Mammary epithelial cell (primary cell): ENCODE measurements at regions of chr11 and their contacts with region 1.

Region 1: DNA sequence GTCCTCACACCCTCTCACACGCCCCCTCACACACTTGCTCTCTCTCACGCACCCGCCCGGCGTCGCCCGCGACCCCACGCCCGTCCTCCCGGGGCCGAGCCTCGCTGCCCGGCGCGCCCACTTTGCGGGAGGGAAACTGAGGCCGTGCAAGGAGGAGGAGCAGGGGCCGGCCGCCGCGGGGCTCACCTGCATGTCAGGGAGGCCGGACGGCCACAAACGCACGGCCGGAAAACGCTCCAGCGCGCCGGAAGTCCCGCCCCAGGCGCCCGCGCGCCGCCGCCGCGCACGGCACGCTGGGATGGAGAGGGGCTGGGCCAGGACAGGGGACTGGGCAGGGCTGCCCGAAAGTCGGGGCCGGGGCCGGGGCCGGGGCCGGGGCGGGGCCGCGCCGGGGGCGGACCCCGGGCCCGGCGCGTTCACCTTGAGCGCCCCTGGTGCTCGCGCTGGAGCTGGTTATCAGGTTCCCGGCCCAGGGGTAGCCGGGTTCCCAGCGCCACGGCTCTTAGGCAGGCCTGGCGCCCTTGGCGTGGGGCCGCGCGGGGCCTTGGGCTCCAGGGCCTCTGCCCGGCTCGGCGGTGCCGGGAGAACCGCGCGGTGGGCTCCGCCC is at the start of gene CHID1:
- DNase-seq: peak; percentile 86
- H3K4me3 ChIP-seq: peak within 1 kb of the TSS; percentile 88 to 91 (median 89)
- H3K27ac ChIP-seq: peak within 1 kb of the TSS; percentile 24
- H3K4me1 ChIP-seq: peaks cover 11% of the 10 kb centered on the region
- H3K27me3 ChIP-seq: no peaks in the 10 kb centered on the region
- CTCF ChIP-seq: peak in 1 of 2 donors; percentile 12
- total RNA-seq, gene CHID1: 61.7 to 110 TPM

Region 2: GRCh38 chr11:925496-926321 is 15.0 kb after region 1 on chr11 and contains the start of gene AP2A2:
- CTCF ChIA-PET with region 1: no interaction called
- dilution Hi-C with region 1: no loop called
- in situ Hi-C with region 1: no loop called
- intact Hi-C with region 1: loop called (anchors 2 kb)
- DNase-seq: peak; percentile 81
- H3K4me3 ChIP-seq: peak within 1 kb of the TSS; percentile 72 to 82 (median 78)
- H3K27ac ChIP-seq: peak within 1 kb of the TSS; percentile 29
- H3K4me1 ChIP-seq: peaks cover 6% of the 10 kb centered on the region
- H3K27me3 ChIP-seq: no peaks in the 10 kb centered on the region
- CTCF ChIP-seq: peak; percentile 39 to 57
- total RNA-seq, gene AP2A2: 66.6 to 66.7 TPM

Region 3: DNA sequence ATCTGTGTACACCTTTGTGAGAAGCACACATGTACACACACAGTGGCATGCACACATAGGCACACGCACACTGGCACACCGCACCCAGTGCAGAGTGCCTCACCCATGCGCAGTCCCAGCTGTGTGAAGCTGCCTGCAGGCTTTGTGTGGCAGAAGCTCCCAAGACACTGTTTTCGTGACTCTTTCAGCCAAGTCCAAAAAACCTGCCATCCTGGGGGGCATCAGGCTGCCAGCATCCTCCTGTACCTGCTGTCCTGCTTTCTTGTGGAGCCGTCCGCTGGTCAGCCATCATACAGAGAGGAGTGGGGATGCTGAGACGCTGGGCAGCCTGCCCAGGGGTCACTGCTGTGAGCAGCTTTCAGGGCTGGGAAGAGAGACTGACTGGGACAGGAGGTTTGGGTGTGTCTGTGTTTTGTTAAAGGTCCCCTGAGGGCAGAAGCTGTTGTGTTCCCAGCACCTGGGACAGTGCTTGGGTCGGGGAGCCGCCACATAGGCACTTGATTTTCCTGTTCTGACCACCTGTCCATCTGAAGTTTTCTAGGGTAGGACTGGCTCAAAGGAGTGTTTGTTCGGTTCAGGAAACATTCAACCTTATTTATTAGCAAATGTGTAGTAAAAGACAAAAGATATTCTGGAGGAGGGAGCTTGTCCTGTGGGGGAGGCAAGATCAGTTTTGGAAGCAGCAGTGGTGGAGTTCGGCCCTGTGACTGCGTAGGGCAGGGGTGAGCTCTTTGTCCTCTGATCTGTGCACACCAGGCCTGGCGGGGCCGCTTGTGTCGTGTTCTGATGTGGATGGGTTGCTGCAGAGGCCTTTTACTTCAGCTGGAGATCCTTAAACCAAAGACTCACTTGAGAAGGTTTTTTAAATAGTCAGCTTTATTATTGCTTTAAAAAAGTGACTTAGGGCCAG is 44.7 kb after region 1 on chr11:
- CTCF ChIA-PET with region 1: no interaction called
- dilution Hi-C with region 1: no loop called
- in situ Hi-C with region 1: no loop called
- intact Hi-C with region 1: no loop called
- DNase-seq: no peak
- H3K4me3 ChIP-seq: no peak overlapping the region
- H3K27ac ChIP-seq: no peak overlapping the region
- H3K4me1 ChIP-seq: no peaks in the 10 kb centered on the region
- H3K27me3 ChIP-seq: no peaks in the 10 kb centered on the region
- CTCF ChIP-seq: no peak

Region 4: DNA sequence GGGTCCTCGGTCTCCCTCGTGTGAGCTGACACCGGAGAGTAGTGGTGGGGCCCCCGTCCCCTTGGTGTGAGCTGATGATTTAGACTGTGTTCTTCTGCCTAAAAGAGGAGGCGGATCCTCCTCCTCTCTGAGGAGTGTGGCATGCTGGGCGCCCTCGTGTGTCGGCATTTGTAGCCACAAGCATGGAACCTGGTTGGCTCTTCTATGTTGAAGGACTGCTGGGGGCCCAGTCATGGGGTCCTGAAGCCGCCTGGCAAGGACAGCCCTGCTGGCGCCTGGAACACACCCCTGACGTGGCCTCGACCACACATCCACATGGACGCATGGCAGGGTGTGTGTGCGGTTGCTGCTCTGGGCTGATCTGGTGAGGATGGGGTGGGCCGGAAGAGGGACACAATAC is 65.1 kb after region 1 on chr11:
- CTCF ChIA-PET with region 1: no interaction called
- dilution Hi-C with region 1: no loop called
- in situ Hi-C with region 1: no loop called
- intact Hi-C with region 1: loop called (anchors 10 kb)
- DNase-seq: no peak
- H3K4me3 ChIP-seq: no peak overlapping the region
- H3K27ac ChIP-seq: no peak overlapping the region
- H3K4me1 ChIP-seq: no peaks in the 10 kb centered on the region
- H3K27me3 ChIP-seq: no peaks in the 10 kb centered on the region
- CTCF ChIP-seq: no peak

Region 5: DNA sequence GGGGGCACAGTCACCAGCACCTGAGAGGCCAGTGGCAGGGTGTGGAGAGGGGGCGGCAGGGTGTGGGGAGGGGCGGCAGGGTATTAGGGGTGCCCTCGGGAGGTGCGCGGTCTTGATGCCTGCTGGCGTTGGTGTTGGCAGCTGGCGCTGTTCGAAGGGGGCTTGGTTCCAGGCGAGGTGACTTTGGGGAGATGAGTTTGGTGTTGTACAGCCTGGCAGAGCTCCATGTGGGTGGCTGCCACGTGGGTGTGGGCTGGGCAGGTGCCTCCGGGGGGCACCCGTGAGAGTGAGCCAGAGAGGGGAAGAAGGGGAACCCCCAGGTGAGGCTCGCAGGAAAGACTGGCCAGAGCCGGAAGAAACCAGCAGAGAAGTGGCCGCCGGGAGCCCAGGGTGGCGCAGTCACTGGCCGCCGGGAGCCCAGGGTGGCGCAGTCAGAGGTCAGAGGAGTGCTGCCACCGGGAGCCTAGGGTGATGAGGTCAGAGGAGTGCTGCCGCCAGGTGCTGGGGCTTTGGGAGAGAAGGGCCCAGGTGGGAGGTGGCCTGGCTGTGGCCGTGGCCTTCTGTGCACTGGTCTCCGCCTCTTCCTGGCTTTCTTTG is 81.1 kb after region 1 on chr11:
- CTCF ChIA-PET with region 1: no interaction called
- dilution Hi-C with region 1: loop called (anchors 5 kb)
- in situ Hi-C with region 1: no loop called
- intact Hi-C with region 1: no loop called
- DNase-seq: no peak
- H3K4me3 ChIP-seq: no peak overlapping the region
- H3K27ac ChIP-seq: no peak overlapping the region
- H3K4me1 ChIP-seq: peaks cover 7% of the 10 kb centered on the region
- H3K27me3 ChIP-seq: no peaks in the 10 kb centered on the region
- CTCF ChIP-seq: no peak

Region 6: DNA sequence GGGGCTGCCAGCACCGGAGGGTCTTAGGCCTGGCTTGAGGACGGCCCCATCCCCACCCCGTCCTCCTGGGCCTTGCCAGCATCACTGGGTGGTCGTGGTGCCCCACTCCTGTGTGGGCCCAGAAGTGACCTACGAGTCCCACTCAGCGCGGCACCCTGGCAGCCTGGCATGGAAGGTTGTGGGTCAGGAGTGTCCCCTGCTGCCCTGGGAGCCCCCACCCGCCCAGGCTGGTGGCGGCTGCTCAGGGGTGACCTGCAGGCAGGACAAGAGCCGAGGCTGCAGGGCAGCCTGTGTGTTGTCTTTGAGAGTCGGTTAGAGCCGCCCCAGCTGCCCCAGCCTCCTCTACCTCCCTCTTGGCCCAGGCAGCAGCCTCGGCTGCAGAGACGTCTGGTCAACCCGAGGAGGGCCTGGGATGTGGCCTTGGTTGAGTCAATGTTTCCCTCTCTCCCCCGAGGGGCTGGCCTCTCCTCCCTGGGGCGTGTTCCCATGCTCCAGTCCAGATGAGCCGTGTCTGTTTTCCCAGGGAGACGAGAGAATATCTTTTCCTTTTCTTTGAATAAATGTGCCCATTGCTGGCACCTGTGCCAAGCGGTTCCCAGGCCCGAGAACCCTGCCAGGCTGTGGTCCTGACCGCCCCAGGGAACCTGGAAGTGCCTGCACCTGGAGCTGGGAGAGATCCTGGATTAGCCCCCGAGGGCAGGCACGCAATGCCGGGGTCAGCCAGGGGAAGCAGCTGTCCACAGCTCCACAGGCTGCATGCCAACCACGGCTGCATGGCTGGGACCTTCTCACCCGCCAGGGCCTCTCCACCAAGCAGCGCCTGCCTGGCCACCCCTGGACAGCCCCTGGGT is 211.3 kb after region 1 on chr11:
- CTCF ChIA-PET with region 1: no interaction called
- dilution Hi-C with region 1: loop called (anchors 10 kb)
- in situ Hi-C with region 1: no loop called
- intact Hi-C with region 1: no loop called
- DNase-seq: no peak
- H3K4me3 ChIP-seq: no peak overlapping the region
- H3K27ac ChIP-seq: no peak overlapping the region
- H3K4me1 ChIP-seq: no peaks in the 10 kb centered on the region
- H3K27me3 ChIP-seq: peaks cover 6% of the 10 kb centered on the region
- CTCF ChIP-seq: no peak